AG04450 (cell line): ENCODE measurements at regions of chr1 and their contacts with region 1.

Region 1: GRCh38 chr1:229258031-229258756 is 12.7 kb upstream of the RAB4A start:
- DNase-seq: peak; percentile 30
- H3K4me3 ChIP-seq: no peak overlapping the region
- H3K27ac ChIP-seq: no peak overlapping the region
- H3K27me3 ChIP-seq: no peaks in the 10 kb centered on the region
- CTCF ChIP-seq: peak; percentile 83

Region 2: DNA sequence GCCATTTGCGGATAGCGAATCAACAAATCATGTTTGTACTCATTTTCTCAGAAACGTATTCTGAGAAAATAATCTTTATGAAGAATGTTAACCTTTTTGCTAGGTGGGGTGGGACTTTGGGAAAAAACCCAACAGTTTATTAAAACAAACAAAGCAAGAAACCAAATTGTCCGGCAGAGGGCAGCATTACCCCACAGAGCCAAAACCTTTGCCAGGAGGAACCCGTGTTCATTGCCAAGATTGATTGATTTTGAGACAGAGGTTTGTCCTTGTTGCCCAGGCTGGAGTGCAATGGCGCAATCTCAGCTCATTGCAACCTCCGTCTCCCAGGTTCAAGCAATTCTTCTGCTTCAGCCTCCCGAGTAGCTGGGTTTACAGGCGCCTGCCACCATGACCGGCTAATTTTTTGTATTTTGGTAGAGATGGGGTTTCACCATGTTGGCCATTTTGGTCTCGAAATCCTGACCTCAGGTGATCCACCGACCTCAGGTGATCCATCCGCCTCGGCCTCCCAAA is 593.7 kb before region 1 on chr1:
- CTCF ChIA-PET with region 1: interaction called, 71 read pairs
- POLR2A ChIA-PET with region 1: no interaction called
- DNase-seq: peak; percentile 13
- H3K4me3 ChIP-seq: no peak overlapping the region
- H3K27ac ChIP-seq: no peak overlapping the region
- H3K27me3 ChIP-seq: peaks cover 5% of the 10 kb centered on the region
- CTCF ChIP-seq: peak; percentile 79

Region 3: GRCh38 chr1:228734881-228735801 is 523.1 kb before region 1 on chr1 and contains the start of gene RHOU:
- CTCF ChIA-PET with region 1: interaction called, 20 read pairs
- POLR2A ChIA-PET with region 1: no interaction called
- DNase-seq: no peak
- H3K4me3 ChIP-seq: peak within 1 kb of the TSS; percentile 63
- H3K27ac ChIP-seq: no peak within 1 kb of the TSS
- H3K27me3 ChIP-seq: peaks cover 37% of the 10 kb centered on the region
- CTCF ChIP-seq: peak; percentile 39; the same call in 1 of the 2 replicates
- polyA plus RNA-seq, gene RHOU: 1.4 and 1.6 TPM in 2 replicates

Region 4: GRCh38 chr1:229268505-229268904 is 10.3 kb after region 1 on chr1:
- CTCF ChIA-PET with region 1: interaction called, 10 read pairs
- POLR2A ChIA-PET with region 1: no interaction called
- DNase-seq: no peak
- H3K4me3 ChIP-seq: no peak overlapping the region
- H3K27ac ChIP-seq: no peak overlapping the region
- H3K27me3 ChIP-seq: no peaks in the 10 kb centered on the region
- CTCF ChIP-seq: no peak

Region 5: GRCh38 chr1:229452956-229453801 is 195.0 kb after region 1 on chr1:
- CTCF ChIA-PET with region 1: interaction called, 29 read pairs
- POLR2A ChIA-PET with region 1: no interaction called
- DNase-seq: no peak
- H3K4me3 ChIP-seq: no peak overlapping the region
- H3K27ac ChIP-seq: no peak overlapping the region
- H3K27me3 ChIP-seq: no peaks in the 10 kb centered on the region
- CTCF ChIP-seq: peak; percentile 69

Region 6: DNA sequence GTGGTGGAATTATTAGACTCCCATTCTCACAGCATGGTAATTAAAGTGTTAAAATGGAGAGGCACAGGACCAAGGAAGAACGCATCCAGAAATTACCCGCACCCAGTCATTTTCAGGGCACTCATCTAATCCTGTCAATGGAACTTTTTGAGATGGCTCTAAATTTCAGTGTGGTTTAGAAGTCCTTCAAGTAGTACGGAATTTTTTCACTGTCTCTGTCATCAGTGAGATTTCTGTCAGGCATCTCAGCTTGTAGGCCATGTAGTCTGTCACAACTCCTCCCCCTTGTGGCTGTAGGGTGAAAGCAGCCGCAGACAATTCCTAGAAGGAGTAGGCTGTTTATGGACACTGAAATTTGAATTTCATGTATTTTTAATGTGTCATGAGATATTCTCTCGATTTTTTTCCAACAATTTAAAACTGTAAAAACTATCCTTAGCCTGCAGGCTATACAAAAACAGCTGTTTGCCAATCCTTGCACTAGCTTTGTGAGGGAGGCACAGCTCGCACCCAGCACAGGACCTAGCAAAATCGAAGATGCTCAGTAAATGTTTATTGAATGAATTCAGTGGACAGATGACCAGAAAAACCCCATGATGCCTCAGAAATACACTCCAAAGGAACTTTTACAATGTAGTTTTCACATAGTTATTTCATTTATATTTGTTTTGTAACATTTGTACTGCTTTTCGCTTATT is 256.5 kb after region 1 on chr1:
- CTCF ChIA-PET with region 1: interaction called, 17 read pairs
- POLR2A ChIA-PET with region 1: no interaction called
- DNase-seq: peak; percentile 30
- H3K4me3 ChIP-seq: no peak overlapping the region
- H3K27ac ChIP-seq: no peak overlapping the region
- H3K27me3 ChIP-seq: no peaks in the 10 kb centered on the region
- CTCF ChIP-seq: peak; percentile 96